ENCODE measurements at regions of chr3 and their contacts with region 1.

Region 1: DNA sequence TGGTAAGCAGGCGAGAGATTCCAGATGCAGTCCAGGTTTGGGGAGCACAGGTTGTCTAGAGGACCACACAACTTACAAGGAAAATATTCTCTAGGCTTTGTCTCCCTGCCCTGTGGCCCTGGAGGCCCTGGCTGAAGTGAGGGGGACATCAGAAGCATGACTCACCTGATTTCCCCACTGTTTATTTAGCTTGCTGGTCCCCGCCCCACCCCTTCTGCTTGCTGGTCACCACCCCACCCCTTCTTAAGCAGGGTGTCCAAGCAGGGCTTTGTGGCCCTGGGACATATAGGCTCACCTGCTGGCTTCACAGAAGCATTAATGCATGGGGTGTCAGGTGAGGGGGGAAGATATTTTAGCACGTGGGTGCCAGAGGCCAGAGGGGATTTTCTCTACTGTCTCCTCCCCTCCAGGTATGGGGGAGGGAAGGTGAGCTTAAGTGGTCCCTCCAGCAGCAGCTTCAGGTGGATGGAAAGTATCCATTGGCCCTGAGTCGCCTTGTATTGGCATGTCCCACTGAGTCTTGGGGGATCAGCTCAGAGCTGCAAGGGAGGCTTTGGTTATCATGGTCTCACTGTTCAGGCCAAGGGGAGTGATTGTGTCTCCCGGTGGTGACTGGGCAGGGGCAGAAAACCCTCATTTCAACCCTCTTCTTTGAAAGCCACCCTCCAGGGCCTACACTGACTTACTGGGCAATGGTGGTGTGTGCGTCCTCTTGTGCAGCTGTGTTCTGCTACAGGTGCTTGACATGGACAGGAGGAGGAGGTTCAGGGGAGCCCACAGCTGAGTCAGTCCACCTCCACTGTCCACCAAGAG is 49.8 kb downstream of the GASK1A start:
- DNase-seq: no peak
- H3K4me3 ChIP-seq: no peak overlapping the region
- CTCF ChIP-seq: no peak
- POLR2A ChIP-seq: no peak

Region 2: GRCh38 chr3:41290736-41291135 is 1738.1 kb before region 1 on chr3:
- intact Hi-C with region 1: loop called (anchors 5 kb)
- DNase-seq: no peak
- H3K4me3 ChIP-seq: no peak overlapping the region
- CTCF ChIP-seq: no peak
- POLR2A ChIP-seq: no peak

Measured in lower leg skin (tissue), 4 donors.